B cell (primary cell): ENCODE measurements at regions of chr4 and their contacts with region 1.

Region 1: DNA sequence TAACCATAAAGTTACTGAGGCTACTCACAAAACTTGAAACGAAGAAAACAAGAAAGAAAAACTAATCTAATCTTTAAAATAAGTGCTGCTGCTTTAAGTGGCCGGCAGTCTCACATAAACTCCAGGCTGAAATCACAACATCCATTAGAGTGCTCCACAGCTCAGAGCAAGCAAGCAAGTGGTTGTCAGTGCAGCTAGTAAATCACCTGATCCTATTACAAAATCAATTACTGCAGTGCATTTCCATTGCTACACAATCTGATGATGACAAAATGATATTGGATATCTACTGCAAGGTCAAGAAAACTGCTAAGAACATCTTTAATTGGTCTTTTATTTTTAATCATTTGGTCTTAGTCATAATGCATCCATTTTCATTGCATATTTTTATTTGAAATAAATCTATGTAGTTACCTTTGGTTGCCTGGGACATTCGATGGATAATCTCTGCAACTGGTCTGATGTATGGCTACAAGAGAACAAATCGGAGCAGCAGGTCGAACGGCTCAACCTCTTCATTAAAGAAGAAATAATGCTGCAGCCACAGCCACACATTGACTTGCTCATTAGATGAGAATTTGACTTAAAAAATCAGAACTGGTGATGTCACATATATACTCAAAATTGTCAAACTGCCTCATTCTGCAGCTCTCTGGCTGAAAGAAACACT is 87.7 kb downstream of the FBXW7 start:
- DNase-seq: no peak
- ATAC-seq: no peak
- H3K4me3 ChIP-seq: no peak overlapping the region
- H3K4me3 Mint-ChIP-seq: no peak overlapping the region
- H3K27ac ChIP-seq: no peak overlapping the region
- H3K27ac Mint-ChIP-seq: no peak overlapping the region
- H3K4me1 ChIP-seq: peaks cover 5 to 9% of the 10 kb centered on the region in 2 donors
- H3K4me1 Mint-ChIP-seq: peaks cover 13% of the 10 kb centered on the region
- H3K27me3 ChIP-seq: no peaks in the 10 kb centered on the region
- H3K27me3 Mint-ChIP-seq: no peaks in the 10 kb centered on the region
- CTCF ChIP-seq: no peak

Region 2: GRCh38 chr4:152479428-152480026 is 31.4 kb after region 1 on chr4:
- CTCF ChIA-PET with region 1: no interaction called
- POLR2A ChIA-PET with region 1: no interaction called
- intact Hi-C with region 1: loop called (anchors 5 kb)
- DNase-seq: no peak
- ATAC-seq: no peak
- H3K4me3 ChIP-seq: no peak overlapping the region
- H3K4me3 Mint-ChIP-seq: no peak overlapping the region
- H3K27ac ChIP-seq: no peak overlapping the region
- H3K27ac Mint-ChIP-seq: no peak overlapping the region
- H3K4me1 ChIP-seq: peaks cover 0 to 3% of the 10 kb centered on the region in 2 donors
- H3K4me1 Mint-ChIP-seq: peaks cover 36% of the 10 kb centered on the region
- H3K27me3 ChIP-seq: no peaks in the 10 kb centered on the region
- H3K27me3 Mint-ChIP-seq: no peaks in the 10 kb centered on the region
- CTCF ChIP-seq: no peak